ENCODE measurements at regions of chr3 and their contacts with region 1.

Region 1: GRCh38 chr3:30597131-30597768 is 9.2 kb upstream of the TGFBR2 start:
- DNase-seq: peak; percentile 63 to 79
- H3K4me3 ChIP-seq: no peak overlapping the region
- H3K4me3 Mint-ChIP-seq: peak overlapping the region; percentile 31
- H3K27ac Mint-ChIP-seq: peak overlapping the region; percentile 89
- H3K4me1 ChIP-seq: peaks cover 45% of the 10 kb centered on the region
- H3K4me1 Mint-ChIP-seq: peaks cover 16% of the 10 kb centered on the region
- H3K27me3 ChIP-seq: no peaks in the 10 kb centered on the region
- H3K27me3 Mint-ChIP-seq: no peaks in the 10 kb centered on the region
- CTCF ChIP-seq: no peak

Region 2: DNA sequence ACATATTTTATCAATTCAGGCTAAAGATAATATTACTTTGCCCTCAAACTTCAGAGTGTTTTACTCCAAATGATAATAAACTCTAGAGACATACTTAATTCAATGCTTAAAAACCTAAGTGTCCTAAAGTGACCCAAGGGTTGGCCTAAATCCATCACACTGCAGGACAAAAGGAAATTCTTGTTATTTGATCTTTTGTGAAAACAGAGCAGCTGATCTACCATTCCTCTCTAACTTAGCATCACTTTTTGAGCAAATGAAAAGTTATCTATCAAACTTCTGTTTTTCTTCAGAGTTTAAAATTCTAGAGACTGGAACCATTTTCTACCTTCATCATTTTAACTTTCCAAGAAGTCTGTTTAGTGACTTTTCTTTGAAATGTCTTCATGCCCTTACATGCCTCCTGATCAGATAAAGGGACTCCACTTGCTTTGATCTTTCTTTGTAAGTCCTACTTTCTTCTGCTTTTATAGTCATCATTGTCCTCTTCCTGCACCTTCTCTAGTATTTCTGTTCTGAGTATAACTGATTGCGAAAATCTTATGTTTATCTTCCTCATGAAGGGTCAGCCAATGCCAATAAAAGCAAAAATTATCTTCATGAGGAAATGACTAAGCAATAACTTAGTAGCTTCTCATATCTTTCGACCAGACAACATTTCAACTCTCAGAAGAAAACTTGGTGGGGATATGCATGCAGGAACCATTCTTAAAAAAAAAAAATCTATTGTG is 369.5 kb before region 1 on chr3:
- CTCF ChIA-PET with region 1: no interaction called
- POLR2A ChIA-PET with region 1: no interaction called
- intact Hi-C with region 1: loop called (anchors 1 kb)
- DNase-seq: peak in 1 of 2 experiments; percentile 60
- H3K4me3 ChIP-seq: no peak overlapping the region
- H3K4me3 Mint-ChIP-seq: peak overlapping the region; percentile 47
- H3K27ac Mint-ChIP-seq: peak overlapping the region; percentile 85
- H3K4me1 ChIP-seq: peaks cover 33% of the 10 kb centered on the region
- H3K4me1 Mint-ChIP-seq: peaks cover 20% of the 10 kb centered on the region
- H3K27me3 ChIP-seq: no peaks in the 10 kb centered on the region
- H3K27me3 Mint-ChIP-seq: no peaks in the 10 kb centered on the region
- CTCF ChIP-seq: no peak

Region 3: DNA sequence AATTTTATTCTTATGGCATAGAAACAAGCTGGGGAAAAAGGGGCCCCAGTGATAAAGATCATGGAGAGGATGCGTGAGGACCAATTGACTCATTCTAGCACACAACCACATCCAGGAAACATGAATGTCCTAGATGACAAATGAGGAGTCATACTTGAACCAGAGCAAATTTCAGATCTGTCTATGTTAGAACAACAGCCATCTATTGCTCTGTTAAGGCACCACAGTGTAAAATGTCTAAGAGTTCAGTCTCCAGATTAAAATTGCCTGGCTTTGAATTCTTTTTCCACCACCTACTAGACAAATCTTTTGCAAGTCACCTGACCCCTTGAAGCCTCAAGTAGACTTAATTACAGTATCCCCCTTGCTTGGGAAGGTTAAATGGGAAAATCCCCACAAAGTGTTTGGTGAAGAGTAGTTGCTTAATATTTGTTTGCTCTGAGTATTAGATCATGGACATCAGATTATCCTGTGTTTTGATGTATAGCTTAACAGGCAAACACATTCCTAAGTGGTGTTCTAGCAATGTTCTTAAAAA is 249.5 kb before region 1 on chr3:
- CTCF ChIA-PET with region 1: no interaction called
- POLR2A ChIA-PET with region 1: no interaction called
- intact Hi-C with region 1: loop called (anchors 10 kb)
- DNase-seq: no peak
- H3K4me3 ChIP-seq: no peak overlapping the region
- H3K4me3 Mint-ChIP-seq: no peak overlapping the region
- H3K27ac Mint-ChIP-seq: peak overlapping the region; percentile 8
- H3K4me1 ChIP-seq: peaks cover 48% of the 10 kb centered on the region
- H3K4me1 Mint-ChIP-seq: peaks cover 40% of the 10 kb centered on the region
- H3K27me3 ChIP-seq: no peaks in the 10 kb centered on the region
- H3K27me3 Mint-ChIP-seq: no peaks in the 10 kb centered on the region
- CTCF ChIP-seq: no peak

Region 4: GRCh38 chr3:30583973-30584372 is 13.3 kb before region 1 on chr3:
- CTCF ChIA-PET with region 1: no interaction called
- POLR2A ChIA-PET with region 1: no interaction called
- intact Hi-C with region 1: loop called (anchors 1 kb)
- DNase-seq: peak in 1 of 2 experiments; percentile 62
- H3K4me3 ChIP-seq: no peak overlapping the region
- H3K4me3 Mint-ChIP-seq: no peak overlapping the region
- H3K27ac Mint-ChIP-seq: peak overlapping the region; percentile 88
- H3K4me1 ChIP-seq: peaks cover 62% of the 10 kb centered on the region
- H3K4me1 Mint-ChIP-seq: peaks cover 41% of the 10 kb centered on the region
- H3K27me3 ChIP-seq: no peaks in the 10 kb centered on the region
- H3K27me3 Mint-ChIP-seq: no peaks in the 10 kb centered on the region
- CTCF ChIP-seq: no peak

Region 5: GRCh38 chr3:30681643-30682211 is 84.5 kb after region 1 on chr3:
- CTCF ChIA-PET with region 1: no interaction called
- POLR2A ChIA-PET with region 1: no interaction called
- intact Hi-C with region 1: no loop called
- DNase-seq: no peak
- H3K4me3 ChIP-seq: no peak overlapping the region
- H3K4me3 Mint-ChIP-seq: no peak overlapping the region
- H3K27ac Mint-ChIP-seq: peak overlapping the region; percentile 43
- H3K4me1 ChIP-seq: peaks cover 7% of the 10 kb centered on the region; the same call in 1 of the 2 replicates
- H3K4me1 Mint-ChIP-seq: peaks cover 25% of the 10 kb centered on the region
- H3K27me3 ChIP-seq: no peaks in the 10 kb centered on the region
- H3K27me3 Mint-ChIP-seq: no peaks in the 10 kb centered on the region
- CTCF ChIP-seq: no peak